CD4-positive, alpha-beta T cell (primary cell): ENCODE measurements at regions of chr1 and their contacts with region 1.

Region 1: DNA sequence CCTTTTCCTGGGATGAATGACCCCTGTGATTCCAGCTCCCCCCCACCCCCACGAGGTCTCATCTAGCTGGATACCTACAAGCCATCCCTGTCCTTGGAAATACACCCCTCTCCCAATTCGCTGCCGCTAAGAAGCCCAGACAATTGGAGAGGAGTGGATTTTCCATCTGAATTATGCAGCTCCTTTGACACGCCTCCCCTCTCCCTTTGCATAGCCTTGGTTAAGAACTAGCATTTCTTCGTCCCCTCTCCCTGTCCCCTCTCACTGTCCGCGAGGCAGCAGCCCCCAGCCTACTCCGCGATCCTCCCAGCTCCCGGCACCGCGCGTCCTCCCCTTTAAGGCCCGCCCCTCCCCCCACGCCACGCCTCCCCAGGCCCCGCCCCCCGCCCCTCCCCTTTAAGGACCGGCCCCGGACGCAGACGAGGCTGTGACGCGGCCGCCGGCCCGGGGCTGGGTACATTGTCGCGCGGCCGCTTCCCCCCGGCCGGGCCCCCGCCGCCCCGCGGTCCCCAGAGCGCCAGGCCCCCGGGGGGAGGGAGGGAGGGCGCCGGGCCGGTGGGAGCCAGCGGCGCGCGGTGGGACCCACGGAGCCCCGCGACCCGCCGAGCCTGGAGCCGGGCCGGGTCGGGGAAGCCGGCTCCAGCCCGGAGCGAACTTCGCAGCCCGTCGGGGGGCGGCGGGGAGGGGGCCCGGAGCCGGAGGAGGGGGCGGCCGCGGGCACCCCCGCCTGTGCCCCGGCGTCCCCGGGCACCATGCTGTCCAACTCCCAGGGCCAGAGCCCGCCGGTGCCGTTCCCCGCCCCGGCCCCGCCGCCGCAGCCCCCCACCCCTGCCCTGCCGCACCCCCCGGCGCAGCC is at the start of gene MAPKAPK2:
- DNase-seq: peak; percentile 58 to 89 (median 74)
- ATAC-seq: peak; percentile 75
- H3K4me3 ChIP-seq: peak within 1 kb of the TSS; percentile 91
- H3K4me3 Mint-ChIP-seq: peak within 1 kb of the TSS; percentile 98
- H3K27ac ChIP-seq: peak within 1 kb of the TSS; percentile 78 to 85
- H3K27ac Mint-ChIP-seq: peak within 1 kb of the TSS; percentile 96
- H3K4me1 ChIP-seq: peaks cover 37% of the 10 kb centered on the region
- H3K4me1 Mint-ChIP-seq: peaks cover 44% of the 10 kb centered on the region
- H3K27me3 ChIP-seq: no peaks in the 10 kb centered on the region
- H3K27me3 Mint-ChIP-seq: no peaks in the 10 kb centered on the region
- CTCF ChIP-seq: no peak
- total RNA-seq, gene MAPKAPK2: 157 to 166 TPM

Region 2: DNA sequence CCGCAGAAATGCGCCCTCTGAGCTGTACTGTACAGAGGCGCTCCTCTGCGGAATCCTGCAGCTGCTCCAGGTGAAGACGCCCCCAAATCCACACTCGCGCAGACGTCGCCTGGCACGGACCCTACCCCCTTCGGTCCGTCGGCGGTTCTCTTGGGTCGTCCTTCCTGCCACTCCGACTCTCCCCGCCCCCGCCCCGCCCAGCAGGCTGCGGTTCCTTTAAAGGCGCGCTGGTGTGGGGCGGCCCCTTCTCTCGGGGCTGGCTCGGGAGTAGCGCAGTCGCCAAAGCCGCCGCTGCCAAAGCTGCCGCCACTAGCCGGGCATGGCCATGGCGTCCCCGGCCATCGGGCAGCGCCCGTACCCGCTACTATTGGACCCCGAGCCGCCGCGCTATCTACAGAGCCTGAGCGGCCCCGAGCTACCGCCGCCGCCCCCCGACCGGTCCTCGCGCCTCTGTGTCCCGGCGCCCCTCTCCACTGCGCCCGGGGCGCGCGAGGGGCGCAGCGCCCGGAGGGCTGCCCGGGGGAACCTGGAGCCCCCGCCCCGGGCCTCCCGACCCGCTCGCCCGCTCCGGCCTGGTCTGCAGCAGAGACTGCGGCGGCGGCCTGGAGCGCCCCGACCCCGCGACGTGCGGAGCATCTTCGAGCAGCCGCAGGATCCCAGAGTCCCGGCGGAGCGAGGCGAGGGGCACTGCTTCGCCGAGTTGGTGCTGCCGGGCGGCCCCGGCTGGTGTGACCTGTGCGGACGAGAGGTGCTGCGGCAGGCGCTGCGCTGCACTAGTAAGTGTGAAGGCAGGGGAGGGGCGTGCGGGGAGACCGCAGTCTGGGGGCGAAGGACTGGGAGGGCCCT is 177.2 kb before region 1 on chr1 and contains the start of gene RASSF5:
- CTCF ChIA-PET with region 1: no interaction called
- POLR2A ChIA-PET with region 1: no interaction called
- intact Hi-C with region 1: loop called in 1 of 2 experiments (anchors 5 kb)
- DNase-seq: peak; percentile 65 to 86 (median 80)
- ATAC-seq: peak; percentile 92
- H3K4me3 ChIP-seq: peak within 1 kb of the TSS; percentile 71
- H3K4me3 Mint-ChIP-seq: peak within 1 kb of the TSS; percentile 86
- H3K27ac ChIP-seq: no peak within 1 kb of the TSS
- H3K27ac Mint-ChIP-seq: peak within 1 kb of the TSS; percentile 39
- H3K4me1 ChIP-seq: peaks cover 37% of the 10 kb centered on the region
- H3K4me1 Mint-ChIP-seq: peaks cover 30% of the 10 kb centered on the region
- H3K27me3 ChIP-seq: peaks cover 4 to 21% of the 10 kb centered on the region in 2 experiments
- H3K27me3 Mint-ChIP-seq: peaks cover 15% of the 10 kb centered on the region
- CTCF ChIP-seq: no peak
- total RNA-seq, gene RASSF5: 153 to 156 TPM

Region 3: GRCh38 chr1:206635080-206635977 is 49.4 kb before region 1 on chr1 and contains the start of gene DYRK3:
- CTCF ChIA-PET with region 1: no interaction called
- POLR2A ChIA-PET with region 1: no interaction called
- intact Hi-C with region 1: loop called in 1 of 2 experiments (anchors 2 kb)
- DNase-seq: peak; percentile 74 to 95 (median 85)
- ATAC-seq: peak; percentile 93
- H3K4me3 ChIP-seq: peak within 1 kb of the TSS; percentile 64
- H3K4me3 Mint-ChIP-seq: peak within 1 kb of the TSS; percentile 92
- H3K27ac ChIP-seq: peak within 1 kb of the TSS in 1 of 2 donors; percentile 52
- H3K27ac Mint-ChIP-seq: peak within 1 kb of the TSS; percentile 66
- H3K4me1 ChIP-seq: peaks cover 20% of the 10 kb centered on the region
- H3K4me1 Mint-ChIP-seq: peaks cover 18% of the 10 kb centered on the region
- H3K27me3 ChIP-seq: peaks cover 0 to 14% of the 10 kb centered on the region in 2 experiments
- H3K27me3 Mint-ChIP-seq: no peaks in the 10 kb centered on the region
- CTCF ChIP-seq: no peak
- total RNA-seq, gene DYRK3: 1.6 to 1.7 TPM

Region 4: GRCh38 chr1:206703661-206704060 is 19.0 kb after region 1 on chr1:
- CTCF ChIA-PET with region 1: interaction called, 6 read pairs
- POLR2A ChIA-PET with region 1: interaction called, 8 read pairs
- intact Hi-C with region 1: loop called in 1 of 2 experiments (anchors 2 kb)
- DNase-seq: peak in 11 of 14 experiments; percentile 19 to 92 (median 65)
- ATAC-seq: peak; percentile 90
- H3K4me3 ChIP-seq: no peak overlapping the region
- H3K4me3 Mint-ChIP-seq: peak overlapping the region; percentile 54
- H3K27ac ChIP-seq: peak overlapping the region; percentile 18 to 35
- H3K27ac Mint-ChIP-seq: peak overlapping the region; percentile 88
- H3K4me1 ChIP-seq: peaks cover 89% of the 10 kb centered on the region
- H3K4me1 Mint-ChIP-seq: peaks cover 93% of the 10 kb centered on the region
- H3K27me3 ChIP-seq: no peaks in the 10 kb centered on the region
- H3K27me3 Mint-ChIP-seq: no peaks in the 10 kb centered on the region
- CTCF ChIP-seq: no peak

Region 5: DNA sequence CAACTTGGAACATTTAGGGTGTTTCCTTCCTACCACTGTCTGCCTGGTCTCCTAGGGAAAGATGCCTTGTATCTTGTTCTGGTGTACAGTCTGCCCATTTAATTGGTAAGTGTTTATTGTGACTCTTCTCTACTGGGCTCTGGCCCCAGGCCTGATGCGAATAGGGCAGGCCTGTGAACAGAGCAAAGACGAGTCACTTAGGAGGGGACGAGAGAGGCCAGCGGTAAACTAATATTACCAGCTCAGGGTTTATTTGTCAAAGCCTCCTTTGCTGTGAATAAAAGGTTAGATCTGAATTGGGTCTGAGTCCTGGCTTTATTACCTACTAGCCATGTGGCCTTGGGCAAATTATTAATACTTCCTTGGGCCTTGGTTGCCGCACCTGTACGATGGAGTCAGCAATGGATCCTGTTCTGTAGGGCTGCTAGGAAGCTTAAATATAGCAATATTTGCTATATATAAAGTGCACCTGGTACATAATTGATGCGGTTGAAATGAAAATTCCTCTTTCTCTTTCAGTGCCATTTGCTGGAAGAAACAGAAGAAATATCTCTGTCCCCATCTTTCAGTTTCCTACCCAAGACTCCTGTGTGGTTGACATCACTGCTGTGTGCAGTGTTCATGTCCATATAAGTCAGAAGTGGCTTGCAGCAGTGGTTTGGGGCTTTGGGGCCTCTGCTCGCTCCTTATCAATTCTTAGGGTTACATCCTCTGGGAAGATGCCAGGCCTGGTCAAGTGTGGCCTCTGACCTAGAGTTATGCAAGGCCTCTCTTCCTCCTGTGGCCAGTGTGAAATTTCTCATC is 32.4 kb after region 1 on chr1:
- CTCF ChIA-PET with region 1: no interaction called
- POLR2A ChIA-PET with region 1: interaction called, 4 read pairs
- intact Hi-C with region 1: loop called (anchors 5 kb)
- DNase-seq: peak in 3 of 14 experiments; percentile 49 to 55 (median 53)
- ATAC-seq: peak; percentile 43
- H3K4me3 ChIP-seq: no peak overlapping the region
- H3K4me3 Mint-ChIP-seq: peak overlapping the region; percentile 8
- H3K27ac ChIP-seq: peak overlapping the region; percentile 1 to 61
- H3K27ac Mint-ChIP-seq: peak overlapping the region; percentile 83
- H3K4me1 ChIP-seq: peaks cover 70% of the 10 kb centered on the region
- H3K4me1 Mint-ChIP-seq: peaks cover 81% of the 10 kb centered on the region
- H3K27me3 ChIP-seq: no peaks in the 10 kb centered on the region
- H3K27me3 Mint-ChIP-seq: no peaks in the 10 kb centered on the region
- CTCF ChIP-seq: no peak

Region 6: DNA sequence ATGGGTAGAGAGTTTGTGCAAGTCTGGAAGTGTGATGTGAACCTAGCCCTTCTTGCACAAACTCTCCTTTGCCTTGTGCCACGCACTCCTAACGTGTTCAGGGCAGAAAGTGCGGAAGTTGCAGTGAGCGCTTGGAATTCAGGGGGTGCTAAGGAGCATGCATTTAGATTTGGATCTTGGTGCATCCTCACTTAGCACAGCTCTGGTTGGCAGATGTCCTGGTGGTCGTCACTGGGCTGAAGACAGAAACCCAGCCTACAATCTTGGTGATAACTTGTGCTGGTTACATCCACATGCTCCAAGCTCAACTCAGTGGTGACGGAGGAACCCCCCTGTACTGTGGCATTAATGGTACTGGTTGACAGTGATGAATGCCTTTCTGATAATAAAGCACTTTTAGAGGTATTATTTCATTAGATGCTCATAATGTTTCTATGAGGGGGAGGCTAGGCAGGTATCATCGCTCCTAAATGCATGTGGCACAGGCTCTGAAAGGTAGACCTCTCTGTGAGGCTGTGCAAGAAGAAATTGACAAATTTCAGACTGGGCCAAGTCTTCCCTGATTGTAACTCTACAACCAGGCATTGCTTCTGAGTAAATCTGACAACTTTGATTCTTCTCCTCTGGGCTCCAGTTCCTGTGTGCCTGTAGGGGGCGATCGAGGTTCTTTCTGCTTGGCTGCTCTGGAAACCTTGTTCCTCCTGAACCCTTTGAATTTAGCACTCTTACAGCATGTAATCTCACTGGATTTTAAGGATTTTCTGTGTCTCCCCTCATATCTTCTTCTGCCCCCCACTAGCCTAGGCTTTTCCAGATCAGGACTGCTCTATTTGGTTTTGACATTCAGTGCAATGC is 40.6 kb after region 1 on chr1:
- CTCF ChIA-PET with region 1: no interaction called
- POLR2A ChIA-PET with region 1: no interaction called
- intact Hi-C with region 1: loop called in 1 of 2 experiments (anchors 5 kb)
- DNase-seq: peak; percentile 40 to 82 (median 55)
- ATAC-seq: peak; percentile 54
- H3K4me3 ChIP-seq: no peak overlapping the region
- H3K4me3 Mint-ChIP-seq: no peak overlapping the region
- H3K27ac ChIP-seq: no peak overlapping the region
- H3K27ac Mint-ChIP-seq: peak overlapping the region; percentile 62
- H3K4me1 ChIP-seq: peaks cover 51% of the 10 kb centered on the region
- H3K4me1 Mint-ChIP-seq: peaks cover 50% of the 10 kb centered on the region
- H3K27me3 ChIP-seq: no peaks in the 10 kb centered on the region
- H3K27me3 Mint-ChIP-seq: no peaks in the 10 kb centered on the region
- CTCF ChIP-seq: peak; percentile 47